H1 (cell line): ENCODE measurements at regions of chr10 and their contacts with region 1.

Region 1: GRCh38 chr10:73965890-73966768 is 31.8 kb upstream of the VCL start:
- DNase-seq: peak; percentile 80 to 96
- H3K4me3 ChIP-seq: peak overlapping the region in 1 of 4 experiments; percentile 38; a peak in 2 of 8 replicates
- H3K27ac ChIP-seq: peak overlapping the region; percentile 98
- H3K4me1 ChIP-seq: peaks cover 18 to 38% (median 31%) of the 10 kb centered on the region in 4 experiments
- H3K27me3 ChIP-seq: no peaks in the 10 kb centered on the region
- CTCF ChIP-seq: no peak
- EP300 ChIP-seq: peak in 1 of 2 experiments; percentile 97; a peak in 1 of 3 replicates
- POLR2A ChIP-seq: peak; percentile 71 to 96
- RAD21 ChIP-seq: peak in 1 of 2 experiments; percentile 11; a peak in 1 of 4 replicates

Region 2: GRCh38 chr10:73908853-73909538 is 57.1 kb before region 1 on chr10:
- CTCF ChIA-PET with region 1: no interaction called
- POLR2A ChIA-PET with region 1: interaction called, 23 read pairs
- DNase-seq: no peak
- H3K4me3 ChIP-seq: no peak overlapping the region
- H3K27ac ChIP-seq: no peak overlapping the region
- H3K4me1 ChIP-seq: peaks cover 15 to 30% (median 24%) of the 10 kb centered on the region in 4 experiments
- H3K27me3 ChIP-seq: peaks cover 3 to 19% (median 12%) of the 10 kb centered on the region in 4 experiments; a peak in 6 of 7 replicates
- CTCF ChIP-seq: no peak
- EP300 ChIP-seq: no peak
- POLR2A ChIP-seq: no peak
- RAD21 ChIP-seq: no peak

Region 3: GRCh38 chr10:73931767-73932619 is 34.1 kb before region 1 on chr10:
- CTCF ChIA-PET with region 1: interaction called, 4 read pairs
- POLR2A ChIA-PET with region 1: interaction called, 19 read pairs
- DNase-seq: peak; percentile 57 to 67
- H3K4me3 ChIP-seq: no peak overlapping the region
- H3K27ac ChIP-seq: 0 out of 2 replicates have a peak overlapping the region, but pooled peaks have one; percentile 43
- H3K4me1 ChIP-seq: peaks cover 4 to 8% (median 7%) of the 10 kb centered on the region in 4 experiments
- H3K27me3 ChIP-seq: no peaks in the 10 kb centered on the region
- CTCF ChIP-seq: no peak
- EP300 ChIP-seq: peak in 1 of 2 experiments; percentile 71; a peak in 1 of 3 replicates
- POLR2A ChIP-seq: no peak
- RAD21 ChIP-seq: no peak

Region 4: DNA sequence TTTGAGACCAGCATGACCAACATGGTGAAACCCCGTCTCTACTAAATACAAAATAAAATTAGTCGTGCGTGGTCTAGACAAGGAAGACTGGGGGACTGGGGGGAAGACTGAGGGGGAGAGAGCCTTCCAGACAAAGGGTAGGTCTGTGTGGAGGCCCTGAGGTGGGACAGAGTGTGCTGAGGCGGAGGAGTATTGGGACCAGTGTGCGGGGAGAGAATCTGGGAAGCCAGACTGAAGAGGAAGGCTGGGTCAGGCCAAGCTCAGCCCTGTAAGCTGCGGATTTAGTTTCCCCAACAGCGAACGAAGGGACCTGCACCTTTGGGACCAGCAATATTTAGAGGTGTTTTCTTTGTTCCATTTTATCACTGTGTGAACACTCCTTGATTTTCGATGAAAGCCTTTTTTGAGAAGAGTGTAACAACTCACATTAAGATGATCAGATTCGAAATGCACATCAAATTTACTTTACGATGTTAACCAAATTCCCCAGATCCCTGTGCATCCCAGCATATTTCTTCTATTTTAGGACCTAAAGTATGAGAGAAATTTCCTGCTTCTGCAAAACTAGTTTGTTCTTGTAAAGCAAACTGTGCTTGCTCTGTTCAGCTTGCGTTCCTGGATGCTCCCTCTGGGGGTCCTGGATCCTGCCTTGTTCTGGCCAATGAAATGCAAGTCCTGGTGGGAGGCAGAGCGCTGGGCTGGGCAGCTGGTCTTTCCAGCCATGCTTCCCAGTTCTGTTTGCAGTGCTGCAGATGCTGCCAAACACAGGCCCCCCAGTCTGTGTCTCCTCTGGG is 15.8 kb before region 1 on chr10:
- CTCF ChIA-PET with region 1: interaction called, 9 read pairs
- POLR2A ChIA-PET with region 1: interaction called, 34 read pairs
- DNase-seq: peak in 1 of 2 experiments; percentile 64
- H3K4me3 ChIP-seq: no peak overlapping the region
- H3K27ac ChIP-seq: no peak overlapping the region
- H3K4me1 ChIP-seq: peaks cover 0 to 4% (median under 1%) of the 10 kb centered on the region in 4 experiments; a peak in 2 of 7 replicates
- H3K27me3 ChIP-seq: no peaks in the 10 kb centered on the region
- CTCF ChIP-seq: peak in 1 of 3 experiments; percentile 9; a peak in 1 of 4 replicates
- EP300 ChIP-seq: no peak
- POLR2A ChIP-seq: no peak
- RAD21 ChIP-seq: no peak; a peak in 1 of 4 replicates

Region 5: DNA sequence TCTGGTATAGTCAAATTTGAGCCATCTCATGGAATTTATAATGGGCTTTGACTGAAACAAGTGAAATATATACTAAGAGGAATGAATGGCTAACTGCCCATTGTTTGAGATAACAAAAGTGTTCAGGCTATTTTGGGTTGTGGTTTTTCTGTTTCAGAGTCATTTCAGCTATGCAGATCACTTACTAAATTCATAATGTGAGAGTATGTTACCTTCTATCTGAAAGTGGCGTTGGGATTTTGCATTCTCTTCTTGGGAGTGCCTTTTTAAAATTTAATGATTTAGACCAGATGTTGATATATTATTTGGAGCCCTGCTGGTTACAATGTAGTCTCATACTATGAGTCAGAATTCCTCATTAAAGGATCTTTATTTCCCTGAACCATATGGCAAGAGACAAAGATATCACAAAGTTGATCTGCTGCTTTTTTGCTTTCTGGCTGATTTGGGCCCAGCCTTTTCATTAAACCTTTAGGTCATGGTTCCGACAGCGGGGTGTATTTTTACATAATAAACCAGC is 42.1 kb after region 1 on chr10:
- CTCF ChIA-PET with region 1: interaction called, 4 read pairs
- POLR2A ChIA-PET with region 1: interaction called, 261 read pairs
- DNase-seq: no peak
- H3K4me3 ChIP-seq: no peak overlapping the region
- H3K27ac ChIP-seq: no peak overlapping the region
- H3K4me1 ChIP-seq: peaks cover 0 to 15% (median under 1%) of the 10 kb centered on the region in 4 experiments; a peak in 3 of 7 replicates
- H3K27me3 ChIP-seq: no peaks in the 10 kb centered on the region
- CTCF ChIP-seq: no peak
- EP300 ChIP-seq: no peak
- POLR2A ChIP-seq: peak in 1 of 2 experiments; percentile 82; a peak in 1 of 3 replicates
- RAD21 ChIP-seq: no peak

Region 6: GRCh38 chr10:74081192-74081803 is 115.2 kb after region 1 on chr10:
- CTCF ChIA-PET with region 1: interaction called, 3 read pairs
- POLR2A ChIA-PET with region 1: interaction called, 21 read pairs
- DNase-seq: no peak
- H3K4me3 ChIP-seq: no peak overlapping the region
- H3K27ac ChIP-seq: no peak overlapping the region
- H3K4me1 ChIP-seq: peaks cover 0 to 15% (median 2%) of the 10 kb centered on the region in 4 experiments; a peak in 3 of 7 replicates
- H3K27me3 ChIP-seq: no peaks in the 10 kb centered on the region
- CTCF ChIP-seq: peak; percentile 32 to 78 (median 77)
- EP300 ChIP-seq: no peak
- POLR2A ChIP-seq: no peak
- RAD21 ChIP-seq: peak; percentile 60 to 77

Region 7: GRCh38 chr10:74255888-74256357 is 289.8 kb after region 1 on chr10:
- CTCF ChIA-PET with region 1: no interaction called
- POLR2A ChIA-PET with region 1: no interaction called
- DNase-seq: no peak
- H3K4me3 ChIP-seq: no peak overlapping the region
- H3K27ac ChIP-seq: no peak overlapping the region
- H3K4me1 ChIP-seq: peaks cover 0 to 11% (median 4%) of the 10 kb centered on the region in 4 experiments; a peak in 4 of 7 replicates
- H3K27me3 ChIP-seq: no peaks in the 10 kb centered on the region
- CTCF ChIP-seq: no peak
- EP300 ChIP-seq: no peak
- POLR2A ChIP-seq: no peak
- RAD21 ChIP-seq: no peak